Activated naive CD4-positive, alpha-beta T cell treated with anti-CD3 and anti-CD28 coated beads for 36 hours (primary cell): ENCODE measurements at regions of chr19 and their contacts with region 1.

Region 1: DNA sequence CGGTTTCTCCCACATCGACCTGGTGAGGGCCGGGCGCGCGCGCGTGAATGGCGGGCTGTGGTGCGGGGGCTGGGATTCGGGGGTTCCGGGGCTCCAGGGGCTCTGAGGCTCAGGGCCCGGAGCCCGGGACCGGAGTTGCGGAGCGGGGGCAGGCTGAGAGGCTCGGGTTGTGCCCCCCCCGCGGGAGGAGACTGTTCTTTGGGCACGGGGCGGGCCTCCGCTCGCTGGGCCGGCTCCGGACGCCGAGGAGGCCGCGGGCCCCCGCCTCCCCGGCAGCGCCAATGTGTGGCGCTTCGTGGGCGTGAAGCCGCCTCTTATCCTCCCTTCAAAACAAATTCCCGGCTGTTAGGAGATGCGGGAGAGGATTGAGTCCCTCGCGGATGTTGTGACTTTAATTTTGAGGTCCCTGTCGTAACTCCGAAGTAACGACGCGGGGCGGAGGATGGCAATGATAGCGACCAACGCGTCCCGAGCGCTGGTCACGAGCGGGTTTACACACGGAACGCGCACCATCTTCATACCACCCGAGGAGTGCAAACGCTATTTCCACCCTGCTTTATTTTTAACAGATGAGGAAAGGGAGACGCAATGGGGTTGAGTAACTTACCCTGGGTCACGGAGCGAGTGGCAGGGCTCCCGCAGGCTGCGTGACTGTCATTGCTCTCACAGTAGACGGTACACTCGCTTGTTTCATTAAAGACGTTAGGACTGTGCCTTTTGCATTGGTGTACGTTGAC is 536 bp downstream of the UBA2 start:
- DNase-seq: peak; percentile 56
- H3K4me3 Mint-ChIP-seq: peak overlapping the region; percentile 97
- H3K27ac Mint-ChIP-seq: peak overlapping the region; percentile 94
- H3K4me1 Mint-ChIP-seq: peaks cover 35% of the 10 kb centered on the region
- H3K27me3 Mint-ChIP-seq: no peaks in the 10 kb centered on the region

Region 2: GRCh38 chr19:34351382-34351826 is 77.3 kb before region 1 on chr19:
- CTCF ChIA-PET with region 1: no interaction called
- intact Hi-C with region 1: loop called (anchors 1 kb)
- DNase-seq: no peak
- H3K4me3 Mint-ChIP-seq: no peak overlapping the region
- H3K27ac Mint-ChIP-seq: peak overlapping the region; percentile 81
- H3K4me1 Mint-ChIP-seq: peaks cover 18% of the 10 kb centered on the region
- H3K27me3 Mint-ChIP-seq: no peaks in the 10 kb centered on the region

Region 3: GRCh38 chr19:34364830-34365462 is 63.8 kb before region 1 on chr19 and contains the start of gene GPI:
- CTCF ChIA-PET with region 1: interaction called, 3 read pairs
- intact Hi-C with region 1: loop called (anchors 2 kb)
- DNase-seq: peak; percentile 67
- H3K4me3 Mint-ChIP-seq: peak within 1 kb of the TSS; percentile 94
- H3K27ac Mint-ChIP-seq: peak within 1 kb of the TSS; percentile 74
- H3K4me1 Mint-ChIP-seq: peaks cover 47% of the 10 kb centered on the region
- H3K27me3 Mint-ChIP-seq: no peaks in the 10 kb centered on the region
- total RNA-seq, gene GPI: 542 to 553 TPM

Region 4: GRCh38 chr19:34475026-34475974 is 46.6 kb after region 1 on chr19:
- CTCF ChIA-PET with region 1: interaction called, 4 read pairs
- intact Hi-C with region 1: loop called (anchors 1 kb)
- DNase-seq: peak; percentile 70
- H3K4me3 Mint-ChIP-seq: no peak overlapping the region
- H3K27ac Mint-ChIP-seq: peak overlapping the region; percentile 84
- H3K4me1 Mint-ChIP-seq: peaks cover 19% of the 10 kb centered on the region
- H3K27me3 Mint-ChIP-seq: peaks cover 11% of the 10 kb centered on the region